SK-N-SH (cell line): ENCODE measurements at regions of chr16 and their contacts with region 1.

Region 1: GRCh38 chr16:67959520-67959919 is 8.9 kb downstream of the SLC12A4 start:
- DNase-seq: no peak
- H3K4me3 ChIP-seq: no peak overlapping the region
- H3K27ac ChIP-seq: peak overlapping the region in 1 of 2 experiments; percentile 37; a peak in 1 of 4 replicates
- H3K4me1 ChIP-seq: peaks cover 0 to 15% of the 10 kb centered on the region in 2 experiments; a peak in 1 of 4 replicates
- H3K27me3 ChIP-seq: no peaks in the 10 kb centered on the region
- CTCF ChIP-seq: no peak
- EP300 ChIP-seq: no peak
- RAD21 ChIP-seq: no peak

Region 2: GRCh38 chr16:67892899-67893742 is 66.4 kb before region 1 on chr16 and contains the start of gene PSKH1:
- CTCF ChIA-PET with region 1: no interaction called
- POLR2A ChIA-PET with region 1: no interaction called
- DNase-seq: peak; percentile 100
- H3K4me3 ChIP-seq: peak within 1 kb of the TSS; percentile 80 to 97
- H3K27ac ChIP-seq: peak within 1 kb of the TSS; percentile 68 to 69
- H3K4me1 ChIP-seq: peaks cover 10 to 11% of the 10 kb centered on the region in 2 experiments; a peak in 2 of 4 replicates
- H3K27me3 ChIP-seq: no peaks in the 10 kb centered on the region
- CTCF ChIP-seq: no peak
- EP300 ChIP-seq: peak in 1 of 2 experiments; percentile 53; a peak in 1 of 4 replicates
- RAD21 ChIP-seq: no peak
- polyA plus RNA-seq, gene PSKH1: 30.1 and 31.4 TPM in 2 replicates

Region 3: GRCh38 chr16:67942200-67942509 is 17.4 kb before region 1 on chr16:
- CTCF ChIA-PET with region 1: interaction called, 32 read pairs
- POLR2A ChIA-PET with region 1: interaction called, 4 read pairs
- DNase-seq: peak; percentile 85
- H3K4me3 ChIP-seq: peak overlapping the region in 1 of 2 experiments; percentile 16; a peak in 1 of 4 replicates
- H3K27ac ChIP-seq: no peak overlapping the region; a peak in 1 of 4 replicates
- H3K4me1 ChIP-seq: peaks cover 4 to 25% of the 10 kb centered on the region in 2 experiments; a peak in 2 of 4 replicates
- H3K27me3 ChIP-seq: no peaks in the 10 kb centered on the region
- CTCF ChIP-seq: peak; percentile 73
- EP300 ChIP-seq: no peak
- RAD21 ChIP-seq: peak; percentile 63

Region 4: DNA sequence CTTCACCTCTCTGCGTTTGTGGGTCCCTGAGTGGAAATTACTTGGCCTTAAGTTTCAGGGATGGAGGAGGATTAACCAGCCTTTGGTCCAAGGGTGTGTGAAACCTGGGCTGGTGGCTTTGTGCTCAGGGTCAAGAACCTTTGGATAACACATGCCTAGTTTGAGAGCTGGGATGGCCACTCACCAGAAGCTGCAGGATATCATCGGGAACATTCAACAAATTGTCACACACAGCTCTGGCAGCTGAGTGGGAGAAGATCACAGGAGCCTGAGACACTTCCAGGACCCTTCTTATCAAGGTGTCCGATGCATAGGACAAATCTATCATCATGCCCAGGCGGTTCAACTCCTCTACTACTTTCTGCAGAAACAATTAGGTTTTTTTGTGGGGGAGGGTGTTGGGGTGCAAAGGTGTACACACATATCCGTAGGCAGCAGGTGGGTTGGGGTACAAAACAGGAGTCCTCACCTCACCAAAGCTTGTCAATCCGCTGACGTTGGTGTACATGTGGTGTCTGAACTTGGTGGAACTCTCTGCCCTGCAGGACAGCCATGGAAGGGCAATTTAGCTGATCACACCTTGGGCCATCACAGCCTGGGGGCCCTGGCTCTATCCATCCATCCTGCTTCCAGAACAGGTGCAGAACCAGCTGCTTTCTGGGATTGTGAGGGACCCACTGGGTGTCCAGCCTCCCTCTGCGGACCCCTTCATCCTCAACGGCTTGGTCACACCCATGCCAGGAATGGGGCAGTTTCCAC is 18.1 kb after region 1 on chr16:
- CTCF ChIA-PET with region 1: no interaction called
- POLR2A ChIA-PET with region 1: no interaction called
- DNase-seq: no peak
- H3K4me3 ChIP-seq: no peak overlapping the region
- H3K27ac ChIP-seq: no peak overlapping the region
- H3K4me1 ChIP-seq: no peaks in the 10 kb centered on the region
- H3K27me3 ChIP-seq: no peaks in the 10 kb centered on the region; the same call in 1 of the 2 replicates
- CTCF ChIP-seq: no peak
- EP300 ChIP-seq: no peak
- RAD21 ChIP-seq: no peak

Region 5: DNA sequence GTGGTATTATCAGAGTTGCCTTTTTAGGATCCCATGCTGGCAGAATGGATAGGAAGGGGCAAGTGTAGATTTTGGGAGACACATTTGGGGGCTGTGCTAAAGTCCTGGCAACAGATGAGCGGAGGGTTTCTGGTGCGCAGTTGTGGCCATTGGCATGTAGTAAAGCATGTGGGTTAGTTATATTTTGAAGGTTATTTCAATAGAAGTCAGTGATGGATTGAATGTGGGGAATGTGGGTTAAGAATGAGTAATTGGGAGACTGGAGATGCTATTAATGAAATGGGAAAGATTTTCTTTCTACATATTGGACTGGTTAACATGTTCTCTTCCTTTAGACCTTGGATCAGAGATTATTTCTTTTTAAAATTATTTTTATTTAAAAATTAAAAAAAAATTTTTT is 73.6 kb after region 1 on chr16:
- CTCF ChIA-PET with region 1: no interaction called
- POLR2A ChIA-PET with region 1: no interaction called
- DNase-seq: no peak
- H3K4me3 ChIP-seq: no peak overlapping the region
- H3K27ac ChIP-seq: no peak overlapping the region
- H3K4me1 ChIP-seq: no peaks in the 10 kb centered on the region
- H3K27me3 ChIP-seq: no peaks in the 10 kb centered on the region
- CTCF ChIP-seq: no peak
- EP300 ChIP-seq: no peak
- RAD21 ChIP-seq: no peak